HEK293 (cell line): ENCODE measurements at regions of chr4 and their contacts with region 1.

Region 1: DNA sequence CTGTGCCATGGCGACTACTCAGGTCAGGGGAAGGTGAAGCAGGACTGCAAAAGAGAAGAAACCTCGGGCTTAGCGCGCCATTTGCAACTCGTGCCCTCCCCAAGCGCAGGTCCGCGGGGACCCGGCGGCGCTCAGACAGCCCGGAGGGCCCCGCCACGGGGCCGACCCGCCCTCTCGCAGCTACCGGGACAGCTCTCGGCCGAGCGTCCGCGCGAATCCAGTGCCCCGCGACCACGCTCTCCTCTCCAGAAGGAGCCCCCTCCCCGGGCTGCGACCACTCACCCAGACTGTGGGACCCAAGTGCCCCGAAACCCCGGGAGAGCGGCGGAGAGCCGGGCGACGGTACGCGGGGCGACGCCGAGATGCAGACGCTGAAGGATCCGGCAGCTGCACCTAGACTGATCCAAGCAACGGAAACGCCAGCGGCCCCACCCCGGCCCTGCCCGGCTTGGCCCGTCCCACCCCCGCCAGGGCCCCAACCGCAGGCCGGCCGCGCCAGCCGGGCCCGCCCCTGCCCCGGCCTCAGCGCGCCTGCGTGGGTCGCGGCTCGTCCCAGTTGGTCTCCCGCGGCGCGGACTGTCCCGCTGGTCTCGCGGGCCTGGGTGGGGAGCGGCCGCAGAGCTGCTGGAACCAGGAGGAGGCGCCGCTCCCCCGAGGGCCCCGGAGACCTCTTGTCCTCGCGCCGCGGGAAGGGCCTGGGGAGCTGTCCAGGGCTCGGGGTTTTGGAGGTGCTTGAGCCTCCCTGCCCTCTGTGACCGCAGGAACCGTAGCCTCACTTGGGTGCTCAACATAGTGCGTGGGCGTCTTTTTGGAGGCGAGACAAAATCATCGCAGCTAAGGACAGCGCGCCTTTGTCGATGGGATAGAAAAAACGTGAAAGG is at the start of gene ANXA5:
- H3K4me3 ChIP-seq: peak within 1 kb of the TSS; percentile 77
- H3K27ac ChIP-seq: peak within 1 kb of the TSS; percentile 86
- H3K4me1 ChIP-seq: peaks cover 3% of the 10 kb centered on the region
- CTCF ChIP-seq: peak; percentile 49; the same call in 1 of the 2 replicates

Region 2: GRCh38 chr4:121668368-121669162 is 28.3 kb before region 1 on chr4:
- CTCF ChIA-PET with region 1: no interaction called
- POLR2A ChIA-PET with region 1: no interaction called
- H3K4me3 ChIP-seq: no peak overlapping the region
- H3K27ac ChIP-seq: no peak overlapping the region
- H3K4me1 ChIP-seq: no peaks in the 10 kb centered on the region
- CTCF ChIP-seq: no peak

Region 3: DNA sequence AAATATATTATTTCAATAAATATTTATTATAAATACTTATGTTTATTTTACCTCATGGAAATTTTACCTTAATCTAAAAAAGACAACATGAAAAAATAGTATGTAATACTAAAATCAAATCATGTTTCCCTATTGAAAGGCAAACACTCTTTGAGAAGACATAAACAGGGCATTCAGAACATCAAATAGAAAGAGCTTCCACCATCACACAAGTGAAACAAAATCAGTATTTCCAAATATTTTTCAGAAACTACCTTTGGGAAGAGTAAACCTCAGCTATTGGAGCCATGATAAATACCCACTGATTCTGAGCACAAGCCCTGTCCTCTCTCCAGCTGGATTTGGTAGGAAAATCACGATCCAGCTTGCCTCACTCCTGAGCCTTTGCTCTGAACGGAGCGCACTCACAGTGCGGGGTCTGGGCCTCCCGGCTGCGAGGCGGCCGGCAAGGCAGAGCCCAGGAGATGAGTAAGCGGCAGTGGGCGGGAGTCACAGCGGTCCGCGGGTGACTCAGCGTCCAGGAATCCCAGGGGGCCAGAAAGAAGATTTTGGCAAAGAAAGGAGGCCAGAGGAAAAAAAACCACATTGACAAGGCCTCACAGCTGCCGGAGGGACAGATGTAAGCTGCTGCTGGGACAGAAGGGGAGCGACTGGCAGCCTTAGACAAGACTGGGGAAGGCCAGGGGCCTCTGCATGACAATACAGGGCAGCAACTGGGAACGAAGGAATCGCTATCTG is 14.6 kb after region 1 on chr4:
- CTCF ChIA-PET with region 1: interaction called, 3 read pairs
- POLR2A ChIA-PET with region 1: interaction called, 27 read pairs
- H3K4me3 ChIP-seq: peak overlapping the region; percentile 19
- H3K27ac ChIP-seq: peak overlapping the region; percentile 51; the same call in 1 of the 2 replicates
- H3K4me1 ChIP-seq: no peaks in the 10 kb centered on the region; the same call in 1 of the 2 replicates
- CTCF ChIP-seq: no peak

Region 4: GRCh38 chr4:121860121-121860520 is 163.3 kb after region 1 on chr4:
- CTCF ChIA-PET with region 1: no interaction called
- POLR2A ChIA-PET with region 1: no interaction called
- H3K4me3 ChIP-seq: no peak overlapping the region
- H3K27ac ChIP-seq: no peak overlapping the region
- H3K4me1 ChIP-seq: no peaks in the 10 kb centered on the region
- CTCF ChIP-seq: no peak

Region 5: DNA sequence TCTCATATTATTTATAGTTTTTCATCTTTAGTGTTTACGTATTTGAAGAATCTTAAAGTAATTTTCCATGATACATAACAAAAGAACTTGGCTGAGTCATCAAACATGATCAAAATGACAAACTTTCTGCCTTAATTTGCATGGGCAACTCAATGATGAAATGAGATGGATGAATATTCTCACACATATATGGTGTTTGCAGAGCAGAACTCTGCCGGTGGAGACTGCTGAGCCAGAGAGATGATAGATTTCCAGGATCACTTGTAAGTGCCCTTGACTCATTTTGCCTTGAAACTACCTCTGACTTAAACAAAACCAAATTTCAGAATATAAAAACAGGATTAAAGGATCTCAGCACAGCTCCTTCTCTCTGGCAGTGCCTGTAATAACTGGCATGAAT is 216.8 kb after region 1 on chr4:
- CTCF ChIA-PET with region 1: no interaction called
- POLR2A ChIA-PET with region 1: no interaction called
- H3K4me3 ChIP-seq: no peak overlapping the region
- H3K27ac ChIP-seq: no peak overlapping the region
- H3K4me1 ChIP-seq: no peaks in the 10 kb centered on the region
- CTCF ChIP-seq: no peak